ENCODE measurements at regions of chr12 and their contacts with region 1.

Region 1: DNA sequence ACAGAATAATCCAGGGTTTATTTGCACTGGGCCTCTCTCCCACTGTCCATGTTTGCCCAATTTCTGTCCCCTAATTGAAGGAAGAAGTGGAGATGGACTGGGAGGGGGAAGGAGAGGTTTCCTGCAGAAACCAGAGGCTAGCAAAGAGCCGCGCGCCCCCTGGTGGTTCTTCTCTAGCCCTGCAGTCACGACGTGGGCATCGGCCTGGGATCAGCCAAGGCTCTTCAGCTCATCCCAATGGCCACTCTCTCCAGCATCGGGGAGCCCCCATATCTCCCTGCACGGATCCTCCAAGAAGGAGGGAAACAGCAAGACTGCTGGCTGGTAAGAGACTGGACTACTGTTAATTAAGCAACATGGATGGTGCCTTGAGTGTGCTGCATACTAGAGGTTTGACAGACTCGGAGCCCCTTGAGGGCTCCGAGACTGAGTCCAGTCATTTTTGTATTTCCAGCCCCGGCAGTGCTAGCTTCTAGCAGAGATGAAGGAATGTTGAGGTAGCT is 18.7 kb downstream of the ZBTB39 start:
- H3K4me3 Mint-ChIP-seq: no peak overlapping the region
- H3K27ac Mint-ChIP-seq: no peak overlapping the region
- H3K4me1 Mint-ChIP-seq: peaks cover 41% of the 10 kb centered on the region
- H3K27me3 Mint-ChIP-seq: no peaks in the 10 kb centered on the region

Region 2: DNA sequence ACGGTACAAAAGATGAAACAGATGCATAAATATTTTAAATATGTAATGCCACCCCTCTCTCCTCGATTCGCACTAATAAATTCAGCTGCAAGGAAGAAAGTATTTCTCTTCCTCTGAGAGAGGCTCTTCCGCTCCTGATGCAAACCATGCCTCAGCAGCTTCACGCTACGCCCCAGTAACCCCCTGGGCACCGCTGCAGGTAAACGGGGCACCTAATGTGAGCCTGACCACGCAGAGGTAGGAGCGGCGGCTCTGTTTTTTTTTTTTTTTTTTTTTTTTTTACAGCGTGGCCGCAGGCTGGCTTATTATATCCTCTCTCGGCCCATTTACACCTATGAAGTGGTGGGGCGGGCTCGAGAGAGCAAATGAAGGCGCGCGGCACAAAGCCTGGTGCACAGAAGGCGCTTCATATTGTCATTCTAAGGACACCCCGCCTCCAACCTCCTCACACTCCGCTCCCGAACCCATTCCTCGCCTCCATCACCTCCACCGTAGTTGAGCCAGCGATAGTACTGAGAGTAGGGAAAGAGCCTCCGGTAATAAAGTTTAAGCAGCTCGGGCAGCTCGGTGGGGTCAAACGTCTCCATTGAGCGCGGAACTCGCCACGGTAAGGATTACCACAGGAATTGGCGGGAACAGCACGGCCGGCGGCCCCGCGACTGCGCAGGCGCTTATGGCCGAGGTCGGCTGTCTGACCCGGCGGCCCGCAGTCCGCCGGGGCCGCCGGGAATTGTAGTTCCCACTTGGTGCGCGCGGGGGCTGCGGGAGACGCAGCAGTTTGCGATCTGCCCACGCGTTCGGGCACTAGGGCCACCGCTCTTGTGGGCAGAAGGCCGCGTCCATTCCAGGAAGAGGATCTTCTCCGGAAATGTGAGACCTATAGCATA is 235.6 kb before region 1 on chr12 and contains the start of gene PRIM1:
- intact Hi-C with region 1: loop called (anchors 1 kb)
- H3K4me3 Mint-ChIP-seq: peak within 1 kb of the TSS; percentile 87
- H3K27ac Mint-ChIP-seq: peak within 1 kb of the TSS; percentile 74
- H3K4me1 Mint-ChIP-seq: peaks cover 51% of the 10 kb centered on the region
- H3K27me3 Mint-ChIP-seq: no peaks in the 10 kb centered on the region

Region 3: DNA sequence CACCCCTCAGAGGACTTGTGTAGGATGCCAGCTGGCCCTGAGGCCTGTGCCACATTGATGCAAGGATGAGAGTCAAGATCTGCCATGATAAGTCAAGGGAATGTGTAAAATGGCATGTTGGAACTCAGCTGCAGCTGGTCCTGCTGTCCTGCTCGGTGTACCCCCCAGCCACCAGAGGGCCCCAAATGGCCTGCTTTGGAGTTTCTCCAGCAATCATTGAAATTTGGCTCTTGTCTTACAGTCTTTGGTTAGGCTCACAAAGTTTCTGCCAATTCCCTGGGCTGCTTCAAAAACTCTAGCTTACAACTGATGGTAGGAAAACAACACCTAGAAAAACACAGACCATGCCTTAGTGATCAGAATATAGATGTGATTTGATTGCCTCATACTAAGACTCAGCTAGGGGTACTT is 147.7 kb before region 1 on chr12:
- intact Hi-C with region 1: loop called (anchors 1 kb)
- H3K4me3 Mint-ChIP-seq: no peak overlapping the region
- H3K27ac Mint-ChIP-seq: no peak overlapping the region
- H3K4me1 Mint-ChIP-seq: peaks cover 12% of the 10 kb centered on the region
- H3K27me3 Mint-ChIP-seq: peaks cover 19% of the 10 kb centered on the region

Region 4: GRCh38 chr12:57190037-57190436 is 202.4 kb after region 1 on chr12:
- intact Hi-C with region 1: no loop called
- H3K4me3 Mint-ChIP-seq: no peak overlapping the region
- H3K27ac Mint-ChIP-seq: no peak overlapping the region
- H3K4me1 Mint-ChIP-seq: no peaks in the 10 kb centered on the region
- H3K27me3 Mint-ChIP-seq: no peaks in the 10 kb centered on the region

Measured in dendritic cell treated with granulocyte-macrophage colony-stimulating factor and Interleukin-4, amounts not matched to agents 40 ng/mL and 50 ng/mL, for 4 days (primary cell).